ENCODE measurements at regions of chr9 and their contacts with region 1.

Region 1: GRCh38 chr9:114141553-114142402 is 13.6 kb upstream of the COL27A1 start:
- DNase-seq: no peak
- H3K4me3 Mint-ChIP-seq: no peak overlapping the region
- H3K27ac Mint-ChIP-seq: no peak overlapping the region
- H3K4me1 Mint-ChIP-seq: no peaks in the 10 kb centered on the region
- H3K27me3 Mint-ChIP-seq: peaks cover 7% of the 10 kb centered on the region

Region 2: GRCh38 chr9:114108016-114108833 is 33.6 kb before region 1 on chr9:
- CTCF ChIA-PET with region 1: interaction called, 14 read pairs
- POLR2A ChIA-PET with region 1: no interaction called
- DNase-seq: peak; percentile 64
- H3K4me3 Mint-ChIP-seq: no peak overlapping the region
- H3K27ac Mint-ChIP-seq: no peak overlapping the region
- H3K4me1 Mint-ChIP-seq: no peaks in the 10 kb centered on the region
- H3K27me3 Mint-ChIP-seq: peaks cover 12% of the 10 kb centered on the region